ENCODE measurements at regions of chr13 and their contacts with region 1.

Region 1: DNA sequence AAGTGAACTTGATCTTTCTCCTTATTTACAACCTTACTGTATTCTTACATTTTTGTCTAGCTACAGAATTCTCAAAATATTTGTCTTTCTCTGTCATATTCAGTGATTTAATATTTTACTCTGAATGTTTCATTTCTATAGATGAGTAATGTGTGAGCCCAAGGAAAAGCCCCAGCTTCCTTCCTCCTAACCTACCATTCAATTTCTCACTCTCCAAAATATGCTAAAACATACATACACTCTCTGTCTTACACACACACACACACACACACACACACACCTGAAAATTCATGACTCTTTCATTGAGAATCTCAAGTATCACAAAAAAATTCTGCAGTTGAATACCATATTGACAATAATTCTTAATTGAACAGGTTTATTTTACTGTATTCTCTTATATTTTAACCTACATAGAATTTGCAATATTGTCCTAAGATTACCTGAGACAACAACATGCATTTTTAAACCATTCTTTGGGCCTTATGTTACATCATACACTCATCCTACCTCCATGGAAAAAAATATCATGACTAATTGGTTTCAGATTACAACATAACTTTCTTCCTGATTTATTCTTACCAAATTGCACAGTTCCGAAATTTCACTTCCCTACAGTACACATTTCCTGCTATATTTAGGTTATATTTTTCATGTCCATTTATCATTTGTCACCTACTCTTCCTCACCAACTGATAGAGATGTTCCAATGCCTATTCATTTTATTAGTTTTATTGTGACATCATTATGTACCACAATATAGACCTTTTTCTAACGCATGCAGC is 1965.6 kb upstream of the PCDH20 start:
- DNase-seq: no peak
- ATAC-seq: no peak
- H3K4me3 ChIP-seq: no peak overlapping the region
- H3K4me3 Mint-ChIP-seq: no peak overlapping the region
- H3K27ac ChIP-seq: no peak overlapping the region
- H3K27ac Mint-ChIP-seq: no peak overlapping the region
- H3K4me1 ChIP-seq: no peaks in the 10 kb centered on the region
- H3K4me1 Mint-ChIP-seq: no peaks in the 10 kb centered on the region
- H3K27me3 ChIP-seq: no peaks in the 10 kb centered on the region
- H3K27me3 Mint-ChIP-seq: no peaks in the 10 kb centered on the region

Region 2: GRCh38 chr13:63614874-63615612 is 233.8 kb after region 1 on chr13:
- CTCF ChIA-PET with region 1: no interaction called
- POLR2A ChIA-PET with region 1: interaction called in 1 of 2 experiments, 14 read pairs
- DNase-seq: no peak
- ATAC-seq: no peak
- H3K4me3 ChIP-seq: no peak overlapping the region
- H3K4me3 Mint-ChIP-seq: no peak overlapping the region
- H3K27ac ChIP-seq: no peak overlapping the region
- H3K27ac Mint-ChIP-seq: no peak overlapping the region
- H3K4me1 ChIP-seq: no peaks in the 10 kb centered on the region
- H3K4me1 Mint-ChIP-seq: no peaks in the 10 kb centered on the region
- H3K27me3 ChIP-seq: no peaks in the 10 kb centered on the region
- H3K27me3 Mint-ChIP-seq: no peaks in the 10 kb centered on the region

Measured in T-cell (primary cell).